Activated CD8-positive, alpha-beta T cell treated with anti-CD3 and anti-CD28 coated beads for 36 hours (primary cell): ENCODE measurements at regions of chr10 and their contacts with region 1.

Region 1: GRCh38 chr10:124719213-124719851 is 24.8 kb downstream of the FAM53B start:
- DNase-seq: peak; percentile 85
- ATAC-seq: peak; percentile 45
- H3K4me3 Mint-ChIP-seq: peak overlapping the region; percentile 52
- H3K27ac Mint-ChIP-seq: peak overlapping the region; percentile 91
- H3K4me1 Mint-ChIP-seq: peaks cover 88% of the 10 kb centered on the region
- H3K27me3 Mint-ChIP-seq: no peaks in the 10 kb centered on the region
- CTCF ChIP-seq: peak; percentile 60

Region 2: DNA sequence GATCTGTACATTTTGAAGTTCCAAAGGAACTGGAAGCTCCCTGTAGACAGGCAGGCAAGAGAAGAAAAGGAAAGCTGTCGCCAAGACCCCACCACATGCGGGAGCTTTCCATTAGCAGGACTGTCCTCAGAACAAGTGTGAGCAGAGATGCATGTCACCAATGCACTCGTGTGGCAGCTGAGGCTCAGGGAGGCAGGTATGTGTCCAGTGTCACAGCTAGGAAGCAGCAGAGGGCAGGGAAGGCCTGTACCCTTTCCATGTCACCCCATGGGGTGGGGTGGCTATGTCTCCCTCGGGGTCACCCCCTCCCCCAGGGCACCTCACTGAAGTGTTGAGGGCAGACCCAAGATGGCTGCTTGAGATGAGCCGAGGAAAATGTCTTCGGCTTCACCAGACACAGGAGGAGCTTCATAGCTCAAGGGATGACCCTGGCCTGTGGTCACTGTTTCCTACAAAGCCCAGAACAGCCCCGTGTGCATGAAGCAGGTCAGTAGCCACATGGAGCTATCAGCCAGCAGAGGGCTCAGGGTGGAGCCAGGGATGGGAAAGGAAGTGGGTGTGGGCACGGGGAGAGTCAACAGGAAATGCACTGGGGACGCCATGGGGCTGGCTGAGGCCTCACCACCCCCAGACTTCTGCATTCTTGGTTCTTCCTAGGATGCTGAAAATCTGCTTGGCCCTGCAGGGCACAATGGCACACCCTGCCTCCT is 71.8 kb before region 1 on chr10:
- CTCF ChIA-PET with region 1: interaction called, 24 read pairs
- POLR2A ChIA-PET with region 1: interaction called, 4 read pairs
- intact Hi-C with region 1: loop called (anchors 10 kb)
- DNase-seq: peak; percentile 83
- ATAC-seq: peak; percentile 70
- H3K4me3 Mint-ChIP-seq: peak overlapping the region; percentile 33
- H3K27ac Mint-ChIP-seq: peak overlapping the region; percentile 88
- H3K4me1 Mint-ChIP-seq: peaks cover 81% of the 10 kb centered on the region
- H3K27me3 Mint-ChIP-seq: no peaks in the 10 kb centered on the region
- CTCF ChIP-seq: peak; percentile 31

Region 3: DNA sequence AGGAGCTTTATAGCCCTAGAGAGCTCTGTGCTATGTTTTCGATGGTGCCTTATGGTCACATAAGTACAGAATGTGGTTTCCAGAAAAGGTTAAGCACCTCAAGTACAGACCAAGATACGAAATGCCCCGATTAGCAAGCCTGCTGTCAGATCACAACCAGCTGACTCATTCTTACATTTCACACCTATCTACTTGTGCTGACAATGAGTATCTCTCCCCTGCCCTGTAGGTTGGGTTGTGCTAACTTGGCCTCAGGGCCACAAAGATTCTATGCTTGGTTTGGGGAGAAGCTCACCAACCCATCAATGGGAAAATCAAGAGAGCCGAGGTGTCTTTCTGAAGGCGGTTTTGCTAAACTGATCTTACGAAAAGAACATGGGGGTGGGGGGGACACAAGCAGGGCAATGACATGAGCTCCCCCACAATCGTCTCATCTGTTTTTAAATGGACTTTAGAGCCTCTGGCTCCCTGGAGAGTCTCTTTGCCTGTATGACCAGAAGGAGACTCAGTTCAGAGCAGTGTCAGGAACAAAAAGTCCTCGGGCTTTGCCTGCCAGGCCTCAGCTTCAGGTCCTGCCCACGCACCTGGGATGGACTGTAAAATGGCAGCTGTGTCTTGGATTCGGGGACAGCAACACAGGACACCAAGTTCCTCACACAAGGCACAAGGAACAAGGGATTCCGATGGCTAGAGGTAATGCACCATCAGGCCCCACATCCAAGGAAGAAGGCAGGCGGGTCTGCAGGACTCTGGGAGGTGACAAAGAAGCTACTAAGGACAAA is 30.3 kb before region 1 on chr10:
- CTCF ChIA-PET with region 1: interaction called, 102 read pairs
- POLR2A ChIA-PET with region 1: interaction called, 68 read pairs
- intact Hi-C with region 1: loop called (anchors 2 kb)
- DNase-seq: peak; percentile 87
- ATAC-seq: peak; percentile 91
- H3K4me3 Mint-ChIP-seq: no peak overlapping the region
- H3K27ac Mint-ChIP-seq: peak overlapping the region; percentile 83
- H3K4me1 Mint-ChIP-seq: peaks cover 79% of the 10 kb centered on the region
- H3K27me3 Mint-ChIP-seq: no peaks in the 10 kb centered on the region
- CTCF ChIP-seq: no peak

Region 4: GRCh38 chr10:124703778-124704427 is 15.4 kb before region 1 on chr10:
- CTCF ChIA-PET with region 1: interaction called, 44 read pairs
- POLR2A ChIA-PET with region 1: interaction called, 58 read pairs
- intact Hi-C with region 1: no loop called
- DNase-seq: no peak
- ATAC-seq: no peak
- H3K4me3 Mint-ChIP-seq: no peak overlapping the region
- H3K27ac Mint-ChIP-seq: peak overlapping the region; percentile 93
- H3K4me1 Mint-ChIP-seq: peaks cover 90% of the 10 kb centered on the region
- H3K27me3 Mint-ChIP-seq: no peaks in the 10 kb centered on the region
- CTCF ChIP-seq: no peak

Region 5: DNA sequence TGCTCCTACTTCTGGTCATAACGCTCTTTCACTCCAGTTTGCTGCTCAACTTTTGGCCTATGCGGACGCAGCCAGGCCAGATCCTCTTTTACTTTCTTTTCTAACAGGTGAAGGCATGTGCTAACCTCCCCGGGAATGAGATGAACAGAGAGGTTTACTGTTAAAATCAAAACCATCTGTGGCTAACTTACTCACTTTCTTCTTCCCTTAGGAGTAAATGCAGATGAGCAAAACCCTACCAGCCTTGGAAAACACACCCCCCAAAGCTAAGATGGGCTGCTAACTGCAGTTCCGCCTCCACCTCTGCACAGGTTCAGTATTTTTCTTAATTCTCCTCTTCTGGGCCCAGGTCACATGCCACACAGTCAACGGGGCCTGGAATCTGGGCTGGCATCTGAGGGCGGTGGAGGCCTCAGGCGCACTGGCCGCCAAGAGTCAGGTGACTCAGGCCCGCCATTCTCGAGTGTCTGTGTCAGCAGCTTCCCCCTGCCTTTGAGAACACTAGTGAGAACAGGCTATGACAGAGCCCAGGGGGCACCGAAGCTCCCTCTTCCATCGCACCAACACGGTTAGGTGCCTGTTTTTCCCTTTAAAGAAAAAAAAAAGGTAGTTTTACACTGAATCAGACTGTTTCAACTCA is 13.7 kb after region 1 on chr10:
- CTCF ChIA-PET with region 1: interaction called, 34 read pairs
- POLR2A ChIA-PET with region 1: interaction called, 44 read pairs
- intact Hi-C with region 1: loop called (anchors 2 kb)
- DNase-seq: peak; percentile 79
- ATAC-seq: peak; percentile 56
- H3K4me3 Mint-ChIP-seq: peak overlapping the region; percentile 61
- H3K27ac Mint-ChIP-seq: peak overlapping the region; percentile 87
- H3K4me1 Mint-ChIP-seq: peaks cover 91% of the 10 kb centered on the region
- H3K27me3 Mint-ChIP-seq: no peaks in the 10 kb centered on the region
- CTCF ChIP-seq: no peak